ENCODE measurements at regions of chr12 and their contacts with region 1.

Region 1: DNA sequence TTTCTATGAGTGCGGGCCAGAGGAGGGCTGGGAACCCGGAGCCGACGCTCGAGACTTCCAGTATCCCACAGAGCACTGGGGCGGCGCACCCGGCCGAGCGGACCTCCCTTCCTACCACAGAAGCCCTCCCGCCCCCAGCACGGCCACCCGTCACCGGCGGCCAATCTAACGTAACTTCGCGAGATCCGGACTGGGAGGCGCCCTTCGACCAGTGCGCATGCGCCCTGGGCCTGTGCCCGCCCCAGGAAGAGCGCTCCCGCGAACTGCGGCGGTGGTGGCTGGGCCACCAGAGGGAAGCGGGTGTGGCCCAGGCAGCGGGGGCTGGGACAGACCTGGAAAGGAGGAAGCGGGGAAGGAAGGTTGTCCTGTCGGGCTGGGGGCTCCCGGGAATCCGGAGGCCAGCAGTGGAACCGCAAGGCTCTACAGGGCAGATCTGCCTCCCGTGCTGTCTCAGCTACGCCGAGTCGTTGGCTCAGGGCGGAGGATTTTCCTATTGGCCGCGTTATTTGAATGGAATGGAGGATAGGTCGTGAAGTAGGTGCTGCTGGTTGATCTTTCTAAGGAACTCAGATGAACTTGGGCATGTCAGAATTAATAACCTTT is at the start of gene PPP1R12A:
- DNase-seq: peak; percentile 96 to 98
- ATAC-seq: peak; percentile 93
- total RNA-seq, gene PPP1R12A: 61.4 to 87.6 TPM

Region 2: GRCh38 chr12:80186727-80187217 is 251.7 kb after region 1 on chr12:
- intact Hi-C with region 1: loop called in 1 of 2 experiments (anchors 10 kb)
- DNase-seq: peak; percentile 16 to 29
- ATAC-seq: peak; percentile 78

Region 3: DNA sequence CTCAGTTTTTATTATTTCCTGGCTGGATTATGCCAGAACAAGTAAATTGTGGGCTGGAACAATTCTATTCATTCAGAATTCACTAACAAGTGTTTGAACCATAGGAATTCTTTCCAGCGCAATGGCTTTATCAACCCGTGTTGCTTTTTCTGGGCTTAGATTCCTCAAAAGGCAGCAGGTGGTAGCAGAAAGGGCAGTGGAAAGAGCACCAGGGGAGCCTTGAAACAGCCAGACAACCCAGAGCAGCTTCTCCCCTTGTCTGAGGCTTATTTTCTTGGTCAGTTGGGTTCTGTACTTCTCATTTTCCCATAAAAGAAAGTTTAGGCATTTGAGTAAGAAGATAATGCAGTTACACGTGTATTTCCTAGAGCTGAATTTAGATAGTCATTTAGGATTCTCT is 294.9 kb after region 1 on chr12:
- intact Hi-C with region 1: no loop called
- DNase-seq: no peak
- ATAC-seq: no peak